Activated T-helper 2 cell treated with anti-CD3 and anti-CD28 coated beads, Interferon-gamma antibody, Interleukin-2, Interleukin-4, amounts not matched to agents 10 μg/mL and 5 μg/mL and 100 μg/mL, durations not matched to agents 14 hours and 24 hours and 36 hours (primary cell): ENCODE measurements at regions of chr2 and their contacts with region 1.

Region 1: DNA sequence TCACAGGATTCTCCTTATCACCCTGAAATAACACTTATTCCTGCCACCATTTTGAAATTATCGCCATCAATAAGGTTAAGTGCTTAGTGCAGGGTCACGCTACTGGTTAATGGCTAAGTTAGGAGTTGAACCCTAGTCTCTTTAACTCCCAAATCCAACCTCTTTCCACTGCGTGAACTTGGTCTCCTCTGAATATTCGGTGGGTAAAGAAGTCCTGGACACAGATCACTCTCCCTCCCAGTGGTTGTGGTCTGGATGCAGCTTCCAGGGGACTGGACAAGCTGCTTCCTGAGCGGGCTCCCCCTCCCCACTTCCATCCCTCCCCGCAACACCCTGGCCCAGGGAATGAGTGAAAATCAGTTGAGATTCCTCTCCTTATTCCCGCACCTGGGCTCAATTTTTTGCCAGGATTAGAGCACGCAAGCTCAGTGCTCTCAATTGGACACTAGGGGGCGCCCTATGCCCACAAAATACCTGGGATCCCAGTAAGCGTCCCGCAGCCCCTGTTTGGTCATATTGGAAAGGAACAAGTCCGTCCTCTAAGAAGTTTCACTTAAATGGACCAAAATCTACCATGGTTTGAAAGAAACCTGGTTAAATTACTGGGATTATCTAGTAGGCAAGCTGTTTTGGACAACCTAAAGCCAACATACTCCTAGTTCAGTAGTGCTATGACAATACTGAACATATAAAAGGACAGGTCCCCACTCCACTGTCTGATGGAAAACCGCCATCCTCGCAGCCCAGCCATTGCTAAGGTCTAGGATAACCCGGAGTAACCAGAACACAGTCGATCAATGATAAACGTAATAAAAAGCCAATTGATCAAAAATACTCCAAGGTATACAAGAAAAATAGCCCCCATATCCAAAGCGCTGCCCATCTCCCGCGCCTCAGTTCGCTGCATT is 40.4 kb downstream of the DHRS9 start:
- DNase-seq: peak; percentile 60
- H3K4me3 Mint-ChIP-seq: no peak overlapping the region
- H3K27ac Mint-ChIP-seq: no peak overlapping the region
- H3K4me1 Mint-ChIP-seq: peaks cover 44% of the 10 kb centered on the region
- H3K27me3 Mint-ChIP-seq: peaks cover 1% of the 10 kb centered on the region

Region 2: DNA sequence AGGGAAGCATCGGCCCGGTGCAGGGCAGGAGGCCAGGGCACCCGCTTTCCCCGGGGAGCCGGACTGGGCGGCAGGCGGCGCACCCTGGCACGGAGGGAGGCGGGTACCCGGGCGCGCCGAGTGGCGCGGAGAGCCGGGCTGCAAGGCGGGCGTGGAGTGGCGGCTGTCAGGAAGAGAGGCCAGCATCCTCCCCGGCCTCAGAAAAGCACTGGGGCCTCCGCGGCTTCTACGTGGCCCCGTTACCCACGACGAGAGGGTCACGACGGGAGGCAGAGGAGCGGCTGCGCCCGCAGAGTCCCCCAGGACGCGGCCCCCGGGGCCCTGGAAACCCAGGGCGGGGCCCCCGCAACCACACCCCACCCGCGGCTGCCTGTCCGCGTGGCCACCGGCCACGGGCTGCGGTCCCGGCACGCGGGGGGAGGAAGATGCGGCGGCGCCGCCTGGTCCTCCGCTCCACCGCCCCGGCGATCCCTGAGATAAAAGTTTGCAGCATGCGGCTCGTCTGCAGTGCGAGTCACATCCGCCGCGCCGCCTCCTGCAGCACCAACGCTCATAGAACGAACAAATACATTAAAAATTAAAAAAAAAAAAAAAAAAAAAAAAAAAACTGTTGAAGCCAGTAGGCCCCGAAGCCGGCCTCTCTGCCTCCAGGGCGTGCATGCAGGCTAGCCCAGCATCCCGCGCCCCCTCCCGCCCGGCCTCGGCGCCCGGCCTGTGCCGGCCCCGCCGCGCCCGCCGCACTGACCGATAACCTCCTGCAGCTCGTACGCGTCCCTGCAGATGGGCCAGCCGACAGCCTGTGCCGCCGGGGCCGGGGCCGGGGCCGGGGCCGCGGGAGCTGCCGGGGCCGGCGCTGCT is 863.0 kb before region 1 on chr2:
- intact Hi-C with region 1: loop called (anchors 10 kb)
- DNase-seq: peak; percentile 83
- H3K4me3 Mint-ChIP-seq: peak overlapping the region; percentile 93
- H3K27ac Mint-ChIP-seq: peak overlapping the region; percentile 94
- H3K4me1 Mint-ChIP-seq: peaks cover 42% of the 10 kb centered on the region
- H3K27me3 Mint-ChIP-seq: no peaks in the 10 kb centered on the region

Region 3: DNA sequence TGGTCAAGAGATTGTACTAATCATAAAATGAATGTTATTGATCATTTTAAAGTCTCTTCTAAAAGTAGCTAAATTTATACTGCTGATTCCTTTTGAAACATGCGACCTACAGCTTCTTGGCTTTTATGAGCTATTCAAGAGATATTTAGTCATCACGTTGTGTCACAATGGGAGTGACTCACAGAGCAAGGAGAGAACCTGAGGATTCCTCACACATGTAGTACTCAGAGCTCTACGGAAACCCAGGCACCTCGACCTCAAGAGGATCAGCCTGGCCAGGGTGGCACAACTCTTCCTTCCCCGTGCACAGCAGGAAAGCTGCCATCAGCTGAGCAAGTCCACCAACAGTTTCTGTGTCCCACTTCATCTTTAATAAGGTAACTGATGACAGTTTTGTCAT is 40.4 kb before region 1 on chr2 and contains the start of gene DHRS9:
- intact Hi-C with region 1: loop called (anchors 1 kb)
- DNase-seq: no peak
- H3K4me3 Mint-ChIP-seq: peak within 1 kb of the TSS; percentile 67
- H3K27ac Mint-ChIP-seq: peak within 1 kb of the TSS; percentile 59
- H3K4me1 Mint-ChIP-seq: peaks cover 44% of the 10 kb centered on the region
- H3K27me3 Mint-ChIP-seq: no peaks in the 10 kb centered on the region
- total RNA-seq, gene DHRS9: 3.3 and 3.6 TPM in 2 replicates

Region 4: GRCh38 chr2:169090133-169090820 is 19.5 kb before region 1 on chr2:
- intact Hi-C with region 1: no loop called
- DNase-seq: no peak
- H3K4me3 Mint-ChIP-seq: no peak overlapping the region
- H3K27ac Mint-ChIP-seq: no peak overlapping the region
- H3K4me1 Mint-ChIP-seq: peaks cover 16% of the 10 kb centered on the region
- H3K27me3 Mint-ChIP-seq: peaks cover 1% of the 10 kb centered on the region

Region 5: DNA sequence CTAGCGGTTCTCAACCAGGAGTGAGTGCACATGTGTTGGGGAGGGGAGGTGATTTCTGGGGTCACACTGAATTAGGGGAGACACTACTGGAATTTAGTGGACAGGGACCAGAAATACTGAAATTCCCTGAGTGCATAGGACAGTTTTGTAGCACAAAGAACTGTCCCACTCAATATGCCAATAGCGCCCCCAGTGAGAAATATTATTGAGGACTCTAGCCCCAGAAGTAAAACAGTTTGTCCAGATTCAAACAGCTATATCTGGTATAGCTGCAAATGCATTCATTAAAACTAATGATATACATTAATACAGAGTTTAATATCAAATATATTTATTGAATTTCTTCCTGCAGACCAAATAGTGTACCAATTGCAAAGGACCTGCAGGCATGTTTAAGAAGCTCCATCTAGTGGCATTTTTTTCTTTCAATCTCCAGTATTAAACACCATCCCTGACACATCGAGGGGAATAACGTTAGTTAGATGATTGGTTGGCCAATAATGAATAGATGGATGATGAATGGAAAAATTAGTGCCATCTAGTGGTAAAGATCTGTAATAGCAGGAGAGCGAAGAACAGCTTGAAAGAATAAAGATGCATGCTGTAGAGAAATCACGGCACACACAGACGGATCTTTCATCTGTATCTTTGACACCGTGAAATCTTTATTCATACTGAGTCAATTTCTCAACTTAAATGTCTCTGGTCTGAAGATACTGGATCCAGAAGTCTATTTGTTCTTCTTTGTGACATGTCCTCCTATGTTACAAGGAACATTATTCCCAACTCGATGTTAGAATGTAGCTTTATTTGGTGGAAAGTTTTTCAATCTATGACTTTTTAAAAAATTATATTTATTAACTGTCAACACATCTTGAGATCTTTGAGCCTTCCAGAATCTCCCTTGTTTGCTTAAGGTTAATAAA is 22.1 kb after region 1 on chr2:
- intact Hi-C with region 1: loop called (anchors 1 kb)
- DNase-seq: no peak
- H3K4me3 Mint-ChIP-seq: no peak overlapping the region
- H3K27ac Mint-ChIP-seq: no peak overlapping the region
- H3K4me1 Mint-ChIP-seq: peaks cover 7% of the 10 kb centered on the region
- H3K27me3 Mint-ChIP-seq: peaks cover 5% of the 10 kb centered on the region

Region 6: GRCh38 chr2:169363560-169364150 is 253.9 kb after region 1 on chr2:
- intact Hi-C with region 1: loop called (anchors 5 kb)
- DNase-seq: peak; percentile 43
- H3K4me3 Mint-ChIP-seq: peak overlapping the region; percentile 90
- H3K27ac Mint-ChIP-seq: peak overlapping the region; percentile 71
- H3K4me1 Mint-ChIP-seq: peaks cover 36% of the 10 kb centered on the region
- H3K27me3 Mint-ChIP-seq: peaks cover 49% of the 10 kb centered on the region